T-cell (primary cell): ENCODE measurements at regions of chr2 and their contacts with region 1.

Region 1: DNA sequence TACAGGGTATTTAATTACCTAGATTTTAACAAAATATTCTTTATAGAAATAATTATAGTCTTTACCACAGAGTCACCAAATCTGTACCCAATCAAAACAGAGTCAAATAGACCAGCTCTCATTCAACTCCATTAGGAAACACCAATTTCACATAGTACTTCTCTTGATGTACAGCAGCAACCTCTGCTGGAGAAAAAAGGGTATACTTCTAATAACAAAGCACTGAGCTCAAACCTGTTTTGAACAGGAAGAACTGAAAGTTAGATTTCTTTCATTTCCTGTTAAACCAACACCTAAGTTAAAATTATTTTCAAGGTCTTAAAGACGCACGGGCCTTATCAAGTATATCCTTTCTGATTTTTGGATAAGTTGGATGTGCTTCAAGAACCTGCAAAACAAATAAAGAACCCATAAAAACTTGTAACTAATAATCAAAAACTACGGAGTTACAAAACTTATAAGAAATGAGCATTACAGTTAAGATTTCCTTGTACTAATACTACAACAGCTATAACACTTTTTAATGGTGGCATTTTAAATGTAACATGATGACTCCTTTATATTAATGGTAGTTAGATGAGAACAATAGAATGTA is 79.0 kb downstream of the TTC21B start:
- DNase-seq: peak in 7 of 35 experiments; percentile 4 to 72 (median 8)
- ATAC-seq: peak; percentile 76 to 96 (median 82)
- H3K4me3 ChIP-seq: no peak overlapping the region
- H3K4me3 Mint-ChIP-seq: no peak overlapping the region
- H3K27ac ChIP-seq: no peak overlapping the region
- H3K27ac Mint-ChIP-seq: peak overlapping the region; percentile 81
- H3K4me1 ChIP-seq: peaks cover 0 to 3% of the 10 kb centered on the region in 2 experiments
- H3K4me1 Mint-ChIP-seq: peaks cover 17 to 27% (median 20%) of the 10 kb centered on the region in 3 donors
- H3K27me3 ChIP-seq: no peaks in the 10 kb centered on the region
- H3K27me3 Mint-ChIP-seq: no peaks in the 10 kb centered on the region

Region 2: GRCh38 chr2:164992818-164993217 is 881.7 kb before region 1 on chr2:
- CTCF ChIA-PET with region 1: interaction called, 3 to 12 read pairs
- POLR2A ChIA-PET with region 1: no interaction called
- DNase-seq: peak in 22 of 35 experiments; percentile 5 to 72 (median 26)
- ATAC-seq: peak in 2 of 4 experiments; percentile 66 to 69
- H3K4me3 ChIP-seq: no peak overlapping the region
- H3K4me3 Mint-ChIP-seq: no peak overlapping the region
- H3K27ac ChIP-seq: no peak overlapping the region
- H3K27ac Mint-ChIP-seq: no peak overlapping the region
- H3K4me1 ChIP-seq: peaks cover 0 to 4% of the 10 kb centered on the region in 2 experiments
- H3K4me1 Mint-ChIP-seq: peaks cover 16 to 20% (median 17%) of the 10 kb centered on the region in 3 donors
- H3K27me3 ChIP-seq: no peaks in the 10 kb centered on the region
- H3K27me3 Mint-ChIP-seq: no peaks in the 10 kb centered on the region

Region 3: GRCh38 chr2:165015052-165015642 is 859.4 kb before region 1 on chr2:
- CTCF ChIA-PET with region 1: interaction called, 7 to 15 read pairs
- POLR2A ChIA-PET with region 1: no interaction called
- DNase-seq: peak in 26 of 35 experiments; percentile 5 to 63 (median 28)
- ATAC-seq: peak in 2 of 4 experiments; percentile 37 to 39
- H3K4me3 ChIP-seq: no peak overlapping the region
- H3K4me3 Mint-ChIP-seq: no peak overlapping the region
- H3K27ac ChIP-seq: no peak overlapping the region
- H3K27ac Mint-ChIP-seq: no peak overlapping the region
- H3K4me1 ChIP-seq: no peaks in the 10 kb centered on the region
- H3K4me1 Mint-ChIP-seq: peaks cover 0 to 5% (median 0%) of the 10 kb centered on the region in 3 donors
- H3K27me3 ChIP-seq: no peaks in the 10 kb centered on the region
- H3K27me3 Mint-ChIP-seq: peaks cover 5 to 9% of the 10 kb centered on the region in 2 donors

Region 4: GRCh38 chr2:165401285-165401852 is 473.2 kb before region 1 on chr2:
- CTCF ChIA-PET with region 1: interaction called, 24 to 80 read pairs
- POLR2A ChIA-PET with region 1: no interaction called
- DNase-seq: peak in 7 of 35 experiments; percentile 0 to 68 (median 7)
- ATAC-seq: no peak
- H3K4me3 ChIP-seq: no peak overlapping the region
- H3K4me3 Mint-ChIP-seq: no peak overlapping the region
- H3K27ac ChIP-seq: no peak overlapping the region
- H3K27ac Mint-ChIP-seq: no peak overlapping the region
- H3K4me1 ChIP-seq: peaks cover 0 to 2% of the 10 kb centered on the region in 2 experiments
- H3K4me1 Mint-ChIP-seq: no peaks in the 10 kb centered on the region
- H3K27me3 ChIP-seq: peaks cover 0 to 4% of the 10 kb centered on the region in 2 experiments
- H3K27me3 Mint-ChIP-seq: peaks cover 9 to 23% of the 10 kb centered on the region in 2 donors

Region 5: GRCh38 chr2:165794536-165794928 is 80.0 kb before region 1 on chr2:
- CTCF ChIA-PET with region 1: interaction called, 3 to 11 read pairs
- POLR2A ChIA-PET with region 1: interaction called in 1 of 2 experiments, 3 read pairs
- DNase-seq: peak in 34 of 35 experiments; percentile 14 to 71 (median 42)
- ATAC-seq: peak; percentile 81 to 91 (median 86)
- H3K4me3 ChIP-seq: peak overlapping the region; percentile 71 to 90
- H3K4me3 Mint-ChIP-seq: peak overlapping the region; percentile 83 to 88 (median 84)
- H3K27ac ChIP-seq: peak overlapping the region; percentile 66
- H3K27ac Mint-ChIP-seq: peak overlapping the region; percentile 84
- H3K4me1 ChIP-seq: peaks cover 4 to 18% of the 10 kb centered on the region in 2 experiments
- H3K4me1 Mint-ChIP-seq: peaks cover 15 to 25% (median 19%) of the 10 kb centered on the region in 3 donors
- H3K27me3 ChIP-seq: peaks cover 0 to 14% of the 10 kb centered on the region in 2 experiments
- H3K27me3 Mint-ChIP-seq: peaks cover 24 to 35% of the 10 kb centered on the region in 2 donors

Region 6: DNA sequence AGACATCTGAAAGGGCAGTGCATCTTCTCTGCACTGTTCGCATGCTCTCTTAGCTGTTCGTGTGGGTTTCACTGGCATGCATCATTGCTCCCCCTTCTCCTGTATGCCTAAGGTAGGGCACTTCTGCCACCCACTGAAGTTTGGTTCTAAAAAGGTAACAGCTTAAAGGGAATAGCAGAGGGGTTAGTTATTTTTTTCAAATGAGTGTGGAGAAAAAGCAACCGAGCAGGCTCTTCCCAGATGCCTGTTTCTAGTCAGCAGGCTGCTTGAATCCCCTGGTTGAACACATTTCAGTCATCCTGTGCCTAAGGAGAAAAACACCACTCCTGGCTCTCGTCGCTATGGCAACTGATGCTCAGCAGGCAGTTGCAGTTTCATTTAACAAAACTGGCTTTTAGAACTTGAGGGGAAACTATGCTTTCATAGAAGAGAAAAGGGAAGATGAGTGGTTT is 10.7 kb before region 1 on chr2:
- CTCF ChIA-PET with region 1: interaction called, 4 to 11 read pairs
- POLR2A ChIA-PET with region 1: no interaction called
- DNase-seq: no peak
- ATAC-seq: no peak
- H3K4me3 ChIP-seq: no peak overlapping the region
- H3K4me3 Mint-ChIP-seq: no peak overlapping the region
- H3K27ac ChIP-seq: no peak overlapping the region
- H3K27ac Mint-ChIP-seq: no peak overlapping the region
- H3K4me1 ChIP-seq: no peaks in the 10 kb centered on the region
- H3K4me1 Mint-ChIP-seq: no peaks in the 10 kb centered on the region
- H3K27me3 ChIP-seq: no peaks in the 10 kb centered on the region
- H3K27me3 Mint-ChIP-seq: no peaks in the 10 kb centered on the region

Region 7: DNA sequence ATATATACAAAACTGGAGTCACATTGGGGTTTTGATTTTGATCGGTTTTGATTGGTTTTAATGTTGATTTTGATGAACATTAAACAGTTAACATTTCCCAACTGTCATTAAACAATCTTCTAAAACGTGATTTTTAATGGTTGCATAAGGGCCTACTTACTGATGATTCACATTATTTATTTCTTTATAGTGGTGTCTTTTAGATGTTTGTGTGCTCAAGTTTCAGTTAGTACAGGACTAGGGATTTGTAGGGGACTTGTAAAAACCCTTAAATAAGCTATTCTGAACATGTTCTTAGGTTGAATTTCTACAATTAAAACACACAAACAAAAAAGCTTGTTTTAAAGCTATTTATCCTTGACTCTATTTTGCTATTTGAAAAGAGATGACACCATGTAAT is 17.4 kb after region 1 on chr2:
- CTCF ChIA-PET with region 1: interaction called, 3 to 11 read pairs
- POLR2A ChIA-PET with region 1: no interaction called
- DNase-seq: no peak
- ATAC-seq: no peak
- H3K4me3 ChIP-seq: no peak overlapping the region
- H3K4me3 Mint-ChIP-seq: no peak overlapping the region
- H3K27ac ChIP-seq: no peak overlapping the region
- H3K27ac Mint-ChIP-seq: no peak overlapping the region
- H3K4me1 ChIP-seq: no peaks in the 10 kb centered on the region
- H3K4me1 Mint-ChIP-seq: no peaks in the 10 kb centered on the region
- H3K27me3 ChIP-seq: no peaks in the 10 kb centered on the region
- H3K27me3 Mint-ChIP-seq: no peaks in the 10 kb centered on the region